CD8-positive, alpha-beta memory T cell (primary cell): ENCODE measurements at regions of chr16 and their contacts with region 1.

Region 1: DNA sequence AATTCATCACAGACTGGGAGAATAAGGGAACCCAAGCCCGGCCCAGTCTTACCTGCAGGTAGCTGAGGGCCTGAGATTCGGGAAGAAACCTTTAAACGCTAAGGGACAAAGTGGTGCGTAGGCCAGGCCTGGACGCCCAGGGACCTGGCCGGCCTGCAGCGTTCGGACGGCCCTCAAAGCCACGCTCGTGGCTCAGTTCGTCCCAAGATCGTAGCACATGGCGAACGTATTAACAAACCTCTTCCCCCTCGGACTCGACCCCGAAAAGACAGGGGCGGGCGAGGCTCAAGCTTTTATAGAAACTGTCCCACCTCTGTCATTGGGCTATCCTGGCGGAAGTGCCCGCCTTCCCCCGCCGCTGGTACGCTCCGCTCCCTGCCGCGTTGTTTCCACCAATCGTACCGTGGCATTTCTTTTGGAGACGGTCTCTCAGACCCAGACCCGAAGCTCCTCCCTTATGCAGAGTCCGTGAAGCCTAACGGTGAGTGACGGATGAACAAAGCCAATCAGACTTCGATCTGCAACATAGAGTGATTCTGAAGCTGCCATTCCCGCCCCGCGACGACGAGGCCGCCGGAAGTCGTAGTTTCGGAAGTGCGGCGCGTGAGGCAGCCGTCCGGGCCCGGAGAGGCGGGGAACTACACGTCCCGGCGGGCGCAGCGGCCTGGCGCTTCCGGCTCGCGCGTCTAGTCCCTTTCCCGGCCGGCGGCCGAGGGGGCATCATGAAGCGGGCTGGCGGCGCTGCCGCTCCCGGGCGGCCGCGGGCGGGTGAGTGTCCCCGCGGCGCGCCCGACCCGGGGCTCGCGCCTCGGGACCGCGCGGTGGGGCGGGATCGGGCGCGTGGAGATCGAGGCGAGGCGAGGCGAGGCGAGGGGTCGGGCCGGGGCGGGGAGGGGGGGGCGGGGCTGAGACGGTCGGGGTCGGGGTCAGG is at the start of gene TRAF7:
- DNase-seq: peak; percentile 94 to 99 (median 98)
- H3K4me3 ChIP-seq: peak within 1 kb of the TSS; percentile 100
- H3K4me3 Mint-ChIP-seq: peak within 1 kb of the TSS; percentile 91 to 95 (median 92)
- H3K27ac ChIP-seq: peak within 1 kb of the TSS; percentile 91
- H3K27ac Mint-ChIP-seq: peak within 1 kb of the TSS; percentile 73 to 96 (median 90)
- H3K4me1 ChIP-seq: peaks cover 59% of the 10 kb centered on the region
- H3K4me1 Mint-ChIP-seq: peaks cover 43 to 75% (median 44%) of the 10 kb centered on the region in 3 donors
- H3K27me3 ChIP-seq: no peaks in the 10 kb centered on the region
- H3K27me3 Mint-ChIP-seq: peaks cover 0 to 7% of the 10 kb centered on the region in 2 donors
- total RNA-seq, gene TRAF7: 102 to 106 TPM

Region 2: GRCh38 chr16:1971796-1972489 is 183.4 kb before region 1 on chr16 and contains the start of gene TBL3:
- CTCF ChIA-PET with region 1: no interaction called
- POLR2A ChIA-PET with region 1: interaction called, 11 read pairs
- DNase-seq: peak; percentile 95 to 98 (median 97)
- H3K4me3 ChIP-seq: peak within 1 kb of the TSS; percentile 66
- H3K4me3 Mint-ChIP-seq: peak within 1 kb of the TSS; percentile 89 to 97 (median 93)
- H3K27ac ChIP-seq: peak within 1 kb of the TSS; percentile 83
- H3K27ac Mint-ChIP-seq: peak within 1 kb of the TSS; percentile 96 to 99 (median 98)
- H3K4me1 ChIP-seq: peaks cover 17% of the 10 kb centered on the region
- H3K4me1 Mint-ChIP-seq: peaks cover 17 to 20% (median 19%) of the 10 kb centered on the region in 3 donors
- H3K27me3 ChIP-seq: no peaks in the 10 kb centered on the region
- H3K27me3 Mint-ChIP-seq: peaks cover 0 to 5% of the 10 kb centered on the region in 2 donors
- total RNA-seq, gene TBL3: 74.6 to 78.0 TPM

Region 3: DNA sequence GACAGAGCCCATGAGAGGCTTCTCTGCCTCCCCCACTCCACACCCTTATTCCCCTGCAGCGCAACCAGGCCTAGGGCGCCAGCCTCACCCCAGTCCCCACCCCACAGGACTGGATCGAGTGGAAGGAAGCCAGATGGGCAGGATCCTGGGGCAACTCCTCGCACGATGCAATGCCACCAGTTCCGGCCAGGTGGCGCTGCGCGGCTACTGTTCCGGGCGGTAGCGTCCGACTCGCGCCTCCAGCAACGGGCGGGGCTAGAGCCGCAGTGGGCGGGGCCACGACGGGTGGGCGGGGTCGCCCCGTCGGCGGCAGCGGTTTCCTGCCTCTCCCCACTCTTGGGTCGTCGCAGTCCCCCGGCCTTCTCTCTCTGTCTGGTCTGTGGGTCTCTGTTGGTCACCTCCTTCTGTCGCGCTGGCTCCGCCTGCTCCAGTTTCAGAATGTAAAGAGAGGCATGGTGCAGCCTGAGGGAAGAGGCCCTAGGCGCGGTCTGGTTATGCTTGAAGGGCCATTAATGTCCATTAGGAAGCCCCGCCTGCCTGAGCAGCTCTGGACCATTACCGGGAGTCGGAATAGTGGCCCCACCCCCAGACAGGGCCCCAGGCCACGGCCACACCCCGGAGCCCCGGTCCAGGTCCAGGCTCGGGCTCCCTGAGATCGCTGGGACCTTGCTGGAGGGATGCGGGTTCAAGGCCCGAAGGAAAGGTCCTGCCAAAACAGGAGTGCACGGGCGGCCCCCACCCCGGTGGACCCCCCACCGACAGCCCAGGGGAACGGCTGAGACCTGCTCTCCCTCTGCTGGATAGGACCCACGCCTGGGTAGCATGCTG is 132.0 kb before region 1 on chr16:
- CTCF ChIA-PET with region 1: interaction called, 25 read pairs
- POLR2A ChIA-PET with region 1: interaction called, 6 read pairs
- DNase-seq: peak; percentile 89 to 95 (median 95)
- H3K4me3 ChIP-seq: peak overlapping the region; percentile 50
- H3K4me3 Mint-ChIP-seq: peak overlapping the region; percentile 56 to 91 (median 70)
- H3K27ac ChIP-seq: peak overlapping the region; percentile 25
- H3K27ac Mint-ChIP-seq: peak overlapping the region in 6 of 8 donors; percentile 54 to 84 (median 78)
- H3K4me1 ChIP-seq: peaks cover 31% of the 10 kb centered on the region
- H3K4me1 Mint-ChIP-seq: peaks cover 11 to 31% (median 18%) of the 10 kb centered on the region in 3 donors
- H3K27me3 ChIP-seq: peaks cover 15% of the 10 kb centered on the region
- H3K27me3 Mint-ChIP-seq: peaks cover 18 to 28% of the 10 kb centered on the region in 2 donors

Region 4: GRCh38 chr16:2213817-2214720 is 58.7 kb after region 1 on chr16:
- CTCF ChIA-PET with region 1: no interaction called
- POLR2A ChIA-PET with region 1: interaction called, 19 read pairs
- DNase-seq: no peak
- H3K4me3 ChIP-seq: peak overlapping the region; percentile 49
- H3K4me3 Mint-ChIP-seq: peak overlapping the region; percentile 70 to 88 (median 74)
- H3K27ac ChIP-seq: peak overlapping the region; percentile 51
- H3K27ac Mint-ChIP-seq: peak overlapping the region in 5 of 8 donors; percentile 19 to 95 (median 60)
- H3K4me1 ChIP-seq: peaks cover 15% of the 10 kb centered on the region
- H3K4me1 Mint-ChIP-seq: peaks cover 16 to 26% (median 17%) of the 10 kb centered on the region in 3 donors
- H3K27me3 ChIP-seq: no peaks in the 10 kb centered on the region
- H3K27me3 Mint-ChIP-seq: no peaks in the 10 kb centered on the region

Region 5: DNA sequence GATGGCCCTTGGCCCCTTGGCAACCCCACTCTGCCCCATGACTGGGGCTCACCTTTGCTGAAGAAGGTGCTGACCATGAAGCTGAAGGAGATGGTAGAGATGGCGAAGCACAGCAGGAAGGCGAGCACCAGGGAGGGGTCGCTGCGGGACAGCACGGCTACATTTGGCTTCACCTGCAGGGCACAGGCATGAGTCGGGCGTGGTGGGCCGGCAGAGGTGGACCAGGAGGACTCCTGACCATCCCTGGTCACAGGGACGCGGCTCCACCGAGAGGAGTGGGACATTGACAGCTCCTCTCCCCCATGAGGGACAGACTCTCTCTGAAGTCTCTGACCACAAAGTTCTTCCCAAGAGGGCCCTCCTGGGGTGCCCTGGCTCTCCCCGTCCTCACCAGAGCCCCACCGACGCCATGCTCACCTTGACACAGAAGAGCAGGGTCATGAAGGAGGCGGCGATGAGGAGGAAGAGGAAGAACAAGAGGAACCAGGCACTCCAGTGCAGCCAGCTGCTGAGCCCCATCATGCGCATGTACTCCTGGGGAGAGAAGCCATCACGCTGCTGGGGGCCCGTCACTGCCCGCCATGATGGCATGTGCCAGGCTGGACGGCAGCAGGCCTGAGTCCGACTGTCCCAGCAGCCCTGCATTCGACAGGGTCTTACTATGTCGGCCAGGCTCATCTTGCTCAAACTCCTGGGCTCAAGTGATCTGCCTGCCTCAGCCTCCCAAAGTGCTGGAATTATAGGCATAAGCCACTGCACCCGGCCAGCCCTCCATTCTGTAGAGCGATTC is 162.1 kb after region 1 on chr16:
- CTCF ChIA-PET with region 1: no interaction called
- POLR2A ChIA-PET with region 1: interaction called, 11 read pairs
- DNase-seq: peak in 1 of 5 donors; percentile 45
- H3K4me3 ChIP-seq: no peak overlapping the region
- H3K4me3 Mint-ChIP-seq: no peak overlapping the region
- H3K27ac ChIP-seq: no peak overlapping the region
- H3K27ac Mint-ChIP-seq: no peak overlapping the region
- H3K4me1 ChIP-seq: no peaks in the 10 kb centered on the region
- H3K4me1 Mint-ChIP-seq: no peaks in the 10 kb centered on the region
- H3K27me3 ChIP-seq: no peaks in the 10 kb centered on the region
- H3K27me3 Mint-ChIP-seq: no peaks in the 10 kb centered on the region